Transverse colon (tissue), 4 donors: ENCODE measurements at regions of chr2 and their contacts with region 1.

Region 1: GRCh38 chr2:157692768-157693167 is 64.1 kb upstream of the ACVR1C start:
- DNase-seq: no peak
- H3K4me3 ChIP-seq: no peak overlapping the region
- H3K27ac ChIP-seq: no peak overlapping the region
- H3K4me1 ChIP-seq: no peaks in the 10 kb centered on the region
- H3K27me3 ChIP-seq: no peaks in the 10 kb centered on the region
- CTCF ChIP-seq: no peak
- EP300 ChIP-seq: no peak
- POLR2A ChIP-seq: no peak

Region 2: DNA sequence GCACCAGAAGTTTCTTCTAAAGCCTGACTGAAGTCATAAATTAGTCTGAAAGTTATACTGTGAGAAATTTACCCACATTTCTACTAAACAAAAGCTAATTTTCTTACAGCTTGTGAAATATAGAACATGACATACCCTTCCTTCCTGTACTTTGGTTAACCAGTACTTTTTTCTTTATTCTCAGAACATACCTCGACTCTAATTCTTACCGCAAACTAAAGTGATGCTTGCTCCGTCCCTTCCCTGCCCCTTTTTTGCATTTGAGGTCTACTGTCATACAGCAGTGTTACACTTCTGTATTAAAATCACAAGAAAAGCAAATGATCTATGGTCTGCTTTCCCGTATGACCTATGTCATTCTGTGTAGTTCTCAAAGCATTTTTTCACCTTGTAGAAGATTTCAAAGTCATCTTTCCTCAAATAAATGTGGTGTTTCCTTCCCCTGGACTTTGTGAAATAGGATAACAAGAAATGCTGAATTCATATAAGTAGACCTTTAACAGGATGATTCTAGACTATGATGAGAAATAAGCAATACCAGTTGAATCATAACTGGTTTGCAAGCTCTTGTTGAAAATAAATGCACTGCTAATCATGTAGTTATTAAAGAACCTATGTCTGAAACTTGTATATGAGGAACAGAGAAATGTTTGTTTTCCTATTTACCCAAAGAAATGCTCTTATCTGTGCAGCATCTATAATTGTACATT is 279.3 kb before region 1 on chr2:
- in situ Hi-C with region 1: no loop called
- intact Hi-C with region 1: no loop called
- DNase-seq: no peak
- H3K4me3 ChIP-seq: no peak overlapping the region
- H3K27ac ChIP-seq: peak overlapping the region; percentile 18 to 41 (median 35)
- H3K4me1 ChIP-seq: peaks cover 0 to 9% (median 2%) of the 10 kb centered on the region in 4 donors
- H3K27me3 ChIP-seq: no peaks in the 10 kb centered on the region
- CTCF ChIP-seq: no peak
- EP300 ChIP-seq: no peak
- POLR2A ChIP-seq: peak; percentile 40

Region 3: DNA sequence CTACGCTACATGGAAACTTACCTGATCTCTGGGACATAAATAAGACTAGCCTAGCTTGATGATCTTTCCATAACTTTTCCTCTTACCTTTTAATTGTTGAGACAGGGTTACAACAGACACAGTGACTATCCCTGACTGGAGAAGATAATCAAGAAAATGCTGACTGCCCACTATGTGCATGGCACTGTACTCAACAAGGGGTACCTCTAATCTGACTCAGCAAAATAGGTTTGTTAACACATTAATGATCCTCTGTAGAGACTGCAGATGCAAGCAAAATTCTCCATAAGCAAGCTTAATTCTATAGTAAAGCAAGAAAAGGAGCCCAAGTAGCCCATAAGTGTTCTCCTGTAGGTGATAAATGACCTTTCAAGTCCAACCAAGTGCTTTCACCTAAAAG is 89.6 kb before region 1 on chr2:
- in situ Hi-C with region 1: no loop called
- intact Hi-C with region 1: no loop called
- DNase-seq: no peak
- H3K4me3 ChIP-seq: no peak overlapping the region
- H3K27ac ChIP-seq: no peak overlapping the region
- H3K4me1 ChIP-seq: no peaks in the 10 kb centered on the region
- H3K27me3 ChIP-seq: peaks cover under 1% of the 10 kb centered on the region
- CTCF ChIP-seq: no peak
- EP300 ChIP-seq: no peak
- POLR2A ChIP-seq: no peak

Region 4: DNA sequence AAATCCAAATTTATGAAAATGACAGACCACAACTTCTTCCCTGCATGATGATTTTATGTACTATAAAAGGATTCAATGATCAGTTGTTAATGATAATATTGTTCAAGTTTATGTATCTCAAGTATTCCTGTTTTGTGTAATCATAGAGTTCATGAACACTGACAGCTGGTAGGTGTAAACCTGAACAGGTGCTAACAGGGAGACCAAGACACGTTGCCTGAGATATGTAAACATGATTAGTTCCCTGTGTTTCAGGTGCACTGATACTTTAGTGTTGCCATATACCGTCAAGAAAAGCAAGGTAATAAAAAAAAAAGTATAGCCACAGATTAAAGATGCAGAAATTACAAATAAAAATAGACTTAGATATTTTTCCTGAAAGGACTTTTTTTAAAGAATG is 1791.8 kb after region 1 on chr2:
- in situ Hi-C with region 1: no loop called
- intact Hi-C with region 1: loop called (anchors 5 kb)
- DNase-seq: no peak
- H3K4me3 ChIP-seq: no peak overlapping the region
- H3K27ac ChIP-seq: no peak overlapping the region
- H3K4me1 ChIP-seq: peaks cover 0 to 11% (median 1%) of the 10 kb centered on the region in 4 donors
- H3K27me3 ChIP-seq: no peaks in the 10 kb centered on the region
- CTCF ChIP-seq: no peak
- EP300 ChIP-seq: no peak
- POLR2A ChIP-seq: no peak